CD4-positive, alpha-beta T cell (primary cell): ENCODE measurements at regions of chr1 and their contacts with region 1.

Region 1: GRCh38 chr1:158124999-158125398 is 55.7 kb upstream of the CD1D start:
- DNase-seq: peak; percentile 42 to 85 (median 58)
- ATAC-seq: peak; percentile 94
- H3K4me3 ChIP-seq: no peak overlapping the region
- H3K4me3 Mint-ChIP-seq: no peak overlapping the region
- H3K27ac ChIP-seq: no peak overlapping the region
- H3K27ac Mint-ChIP-seq: no peak overlapping the region
- H3K4me1 ChIP-seq: no peaks in the 10 kb centered on the region
- H3K4me1 Mint-ChIP-seq: no peaks in the 10 kb centered on the region
- H3K27me3 ChIP-seq: peaks cover 10 to 19% of the 10 kb centered on the region in 2 experiments
- H3K27me3 Mint-ChIP-seq: peaks cover 41% of the 10 kb centered on the region
- CTCF ChIP-seq: peak; percentile 79

Region 2: DNA sequence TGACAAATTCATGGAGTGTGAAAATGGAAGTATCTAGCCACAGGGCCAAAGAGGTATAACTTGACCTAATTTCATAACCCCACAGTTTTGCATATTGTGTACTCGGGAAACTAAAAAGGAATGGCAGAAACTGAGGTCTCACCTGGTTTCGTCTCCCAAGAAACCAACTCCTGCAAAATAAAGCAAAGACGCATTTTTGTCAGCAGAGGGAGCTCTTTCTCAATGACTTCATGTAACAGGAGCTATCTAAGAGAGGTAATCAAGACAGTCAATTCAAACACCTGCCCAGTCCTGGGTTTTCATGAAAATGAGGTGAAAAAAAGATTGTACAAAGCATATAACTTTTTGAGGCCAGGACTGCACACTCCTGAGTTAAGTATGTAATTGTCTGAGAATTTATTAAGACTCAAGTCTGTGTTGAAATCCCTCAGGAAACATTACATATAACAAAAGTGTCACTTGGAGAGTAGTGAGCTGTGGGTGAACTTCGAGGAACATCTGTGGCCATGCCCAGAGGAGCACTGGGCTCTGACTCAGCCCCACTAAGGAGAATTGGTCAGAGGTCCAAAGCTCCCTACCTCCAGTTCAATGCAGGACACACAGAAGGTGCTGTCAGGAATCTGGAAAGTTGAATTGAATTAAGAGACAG is 544.7 kb before region 1 on chr1:
- CTCF ChIA-PET with region 1: interaction called, 12 read pairs
- POLR2A ChIA-PET with region 1: no interaction called
- intact Hi-C with region 1: loop called in 1 of 2 experiments (anchors 1 kb)
- DNase-seq: peak in 5 of 14 experiments; percentile 8 to 64 (median 56)
- ATAC-seq: no peak
- H3K4me3 ChIP-seq: no peak overlapping the region
- H3K4me3 Mint-ChIP-seq: no peak overlapping the region
- H3K27ac ChIP-seq: no peak overlapping the region
- H3K27ac Mint-ChIP-seq: no peak overlapping the region
- H3K4me1 ChIP-seq: no peaks in the 10 kb centered on the region
- H3K4me1 Mint-ChIP-seq: no peaks in the 10 kb centered on the region
- H3K27me3 ChIP-seq: no peaks in the 10 kb centered on the region
- H3K27me3 Mint-ChIP-seq: peaks cover 19% of the 10 kb centered on the region
- CTCF ChIP-seq: peak; percentile 69

Region 3: DNA sequence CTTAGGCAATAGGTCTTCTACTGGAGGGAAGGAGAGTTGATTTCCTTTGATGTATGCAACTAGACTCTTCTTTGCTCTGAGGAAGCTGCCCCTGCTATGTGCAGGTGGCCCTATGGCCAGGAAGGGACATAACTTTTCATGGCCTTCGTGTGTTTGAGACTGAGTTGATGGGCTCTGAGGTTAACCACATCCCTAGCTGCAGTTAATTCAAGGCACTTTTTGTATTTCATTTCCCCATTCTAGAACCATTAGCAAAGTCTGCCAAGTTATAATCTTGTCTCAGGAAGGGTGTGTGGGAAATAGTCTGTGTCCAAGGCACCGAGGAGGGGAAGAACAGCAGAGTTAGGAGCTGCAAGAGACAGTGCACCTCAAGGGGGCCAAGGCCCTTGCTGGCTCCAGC is 529.6 kb before region 1 on chr1:
- CTCF ChIA-PET with region 1: no interaction called
- POLR2A ChIA-PET with region 1: no interaction called
- intact Hi-C with region 1: no loop called
- DNase-seq: peak in 1 of 14 experiments; percentile 4
- ATAC-seq: no peak
- H3K4me3 ChIP-seq: no peak overlapping the region
- H3K4me3 Mint-ChIP-seq: no peak overlapping the region
- H3K27ac ChIP-seq: no peak overlapping the region
- H3K27ac Mint-ChIP-seq: no peak overlapping the region
- H3K4me1 ChIP-seq: no peaks in the 10 kb centered on the region
- H3K4me1 Mint-ChIP-seq: no peaks in the 10 kb centered on the region
- H3K27me3 ChIP-seq: no peaks in the 10 kb centered on the region
- H3K27me3 Mint-ChIP-seq: peaks cover 6% of the 10 kb centered on the region
- CTCF ChIP-seq: no peak

Region 4: GRCh38 chr1:157963713-157964112 is 161.3 kb before region 1 on chr1:
- CTCF ChIA-PET with region 1: interaction called, 5 read pairs
- POLR2A ChIA-PET with region 1: no interaction called
- intact Hi-C with region 1: loop called (anchors 1 to 2 kb)
- DNase-seq: peak; percentile 8 to 67 (median 34)
- ATAC-seq: no peak
- H3K4me3 ChIP-seq: no peak overlapping the region
- H3K4me3 Mint-ChIP-seq: no peak overlapping the region
- H3K27ac ChIP-seq: no peak overlapping the region
- H3K27ac Mint-ChIP-seq: no peak overlapping the region
- H3K4me1 ChIP-seq: no peaks in the 10 kb centered on the region
- H3K4me1 Mint-ChIP-seq: no peaks in the 10 kb centered on the region
- H3K27me3 ChIP-seq: peaks cover 0 to 8% of the 10 kb centered on the region in 2 experiments
- H3K27me3 Mint-ChIP-seq: peaks cover 46% of the 10 kb centered on the region
- CTCF ChIP-seq: peak; percentile 75

Region 5: GRCh38 chr1:158458263-158458662 is 333.3 kb after region 1 on chr1:
- CTCF ChIA-PET with region 1: no interaction called
- POLR2A ChIA-PET with region 1: no interaction called
- intact Hi-C with region 1: no loop called
- DNase-seq: no peak
- ATAC-seq: no peak
- H3K4me3 ChIP-seq: no peak overlapping the region
- H3K4me3 Mint-ChIP-seq: no peak overlapping the region
- H3K27ac ChIP-seq: no peak overlapping the region
- H3K27ac Mint-ChIP-seq: no peak overlapping the region
- H3K4me1 ChIP-seq: no peaks in the 10 kb centered on the region
- H3K4me1 Mint-ChIP-seq: no peaks in the 10 kb centered on the region
- H3K27me3 ChIP-seq: peaks cover 0 to 3% of the 10 kb centered on the region in 2 experiments
- H3K27me3 Mint-ChIP-seq: no peaks in the 10 kb centered on the region
- CTCF ChIP-seq: no peak